PC-9 (cell line): ENCODE measurements at regions of chr13 and their contacts with region 1.

Region 1: DNA sequence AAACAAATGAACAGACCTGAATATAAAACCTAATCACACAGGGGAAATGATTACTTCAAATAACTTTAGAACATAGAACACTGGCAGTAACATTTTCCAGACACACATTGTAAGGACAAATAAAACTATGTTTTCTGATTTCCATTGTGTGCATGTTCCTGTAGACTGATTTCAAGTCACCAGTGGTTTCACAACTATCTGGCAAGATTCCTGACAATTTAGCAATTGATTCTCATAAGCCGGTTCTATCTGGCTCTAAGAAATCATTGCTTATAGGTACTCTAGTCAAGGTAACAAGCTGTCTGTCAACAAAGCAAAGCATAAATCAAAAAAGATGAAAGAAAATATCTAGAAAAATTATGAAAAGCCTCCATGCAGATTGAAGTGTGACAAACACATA is 19.6 kb upstream of the PCCA start:
- DNase-seq: peak in 1 of 2 experiments; percentile 42
- H3K4me3 ChIP-seq: no peak overlapping the region
- H3K27ac ChIP-seq: no peak overlapping the region
- H3K4me1 ChIP-seq: no peaks in the 10 kb centered on the region
- H3K27me3 ChIP-seq: no peaks in the 10 kb centered on the region
- CTCF ChIP-seq: no peak

Region 2: DNA sequence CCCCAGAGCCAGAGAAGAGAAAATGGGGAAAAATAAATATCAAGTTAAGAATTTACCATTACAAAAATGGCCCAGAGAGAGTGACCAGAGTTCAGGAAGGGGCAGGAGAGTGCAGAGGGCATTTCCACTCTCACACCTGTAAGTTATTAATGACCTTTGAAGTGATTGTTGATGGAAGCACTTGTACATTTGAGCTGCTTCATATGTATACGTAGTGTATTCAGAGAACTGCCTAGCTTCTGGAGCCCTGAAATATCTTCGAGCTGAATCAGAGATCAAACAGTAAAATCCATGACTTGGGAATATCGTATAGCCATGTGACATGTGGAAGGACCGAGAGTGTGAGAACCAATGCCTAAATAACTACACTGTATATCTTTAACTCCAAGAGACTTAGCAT is 29.5 kb before region 1 on chr13:
- CTCF ChIA-PET with region 1: no interaction called
- POLR2A ChIA-PET with region 1: interaction called, 23 read pairs
- intact Hi-C with region 1: no loop called
- DNase-seq: no peak
- H3K4me3 ChIP-seq: no peak overlapping the region
- H3K27ac ChIP-seq: no peak overlapping the region
- H3K4me1 ChIP-seq: no peaks in the 10 kb centered on the region
- H3K27me3 ChIP-seq: no peaks in the 10 kb centered on the region
- CTCF ChIP-seq: no peak